ENCODE measurements at regions of chr2 and their contacts with region 1.

Region 1: DNA sequence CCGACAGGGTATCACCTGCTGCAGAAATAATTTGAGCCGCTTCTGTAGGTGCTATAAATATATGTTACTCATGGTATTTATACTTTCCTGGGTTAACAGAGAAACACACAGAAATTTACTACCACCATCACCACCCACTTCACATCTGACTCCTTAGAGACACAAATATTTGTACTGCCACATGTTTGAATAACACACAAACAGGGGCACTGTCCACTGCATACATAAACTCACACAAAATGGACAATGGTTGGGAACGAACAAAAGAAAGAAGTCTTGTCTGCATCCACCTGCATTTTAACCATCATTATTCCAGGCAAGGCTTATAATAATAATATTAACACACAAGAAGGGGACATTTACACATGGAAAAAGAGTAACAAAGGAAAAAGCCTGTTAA is 24.0 kb downstream of the IMMT start:
- DNase-seq: no peak
- ATAC-seq: no peak
- H3K4me3 ChIP-seq: no peak overlapping the region
- H3K4me3 Mint-ChIP-seq: no peak overlapping the region
- H3K27ac ChIP-seq: no peak overlapping the region
- H3K27ac Mint-ChIP-seq: peak overlapping the region in 1 of 9 donors; percentile 12
- H3K4me1 ChIP-seq: no peaks in the 10 kb centered on the region
- H3K4me1 Mint-ChIP-seq: peaks cover 10 to 31% (median 28%) of the 10 kb centered on the region in 7 donors
- H3K27me3 ChIP-seq: no peaks in the 10 kb centered on the region
- H3K27me3 Mint-ChIP-seq: no peaks in the 10 kb centered on the region

Region 2: GRCh38 chr2:86124683-86125082 is 46.6 kb before region 1 on chr2:
- CTCF ChIA-PET with region 1: no interaction called
- POLR2A ChIA-PET with region 1: no interaction called
- intact Hi-C with region 1: no loop called
- DNase-seq: no peak
- ATAC-seq: no peak
- H3K4me3 ChIP-seq: no peak overlapping the region
- H3K4me3 Mint-ChIP-seq: no peak overlapping the region
- H3K27ac ChIP-seq: no peak overlapping the region
- H3K27ac Mint-ChIP-seq: no peak overlapping the region
- H3K4me1 ChIP-seq: no peaks in the 10 kb centered on the region
- H3K4me1 Mint-ChIP-seq: no peaks in the 10 kb centered on the region
- H3K27me3 ChIP-seq: no peaks in the 10 kb centered on the region
- H3K27me3 Mint-ChIP-seq: no peaks in the 10 kb centered on the region

Region 3: DNA sequence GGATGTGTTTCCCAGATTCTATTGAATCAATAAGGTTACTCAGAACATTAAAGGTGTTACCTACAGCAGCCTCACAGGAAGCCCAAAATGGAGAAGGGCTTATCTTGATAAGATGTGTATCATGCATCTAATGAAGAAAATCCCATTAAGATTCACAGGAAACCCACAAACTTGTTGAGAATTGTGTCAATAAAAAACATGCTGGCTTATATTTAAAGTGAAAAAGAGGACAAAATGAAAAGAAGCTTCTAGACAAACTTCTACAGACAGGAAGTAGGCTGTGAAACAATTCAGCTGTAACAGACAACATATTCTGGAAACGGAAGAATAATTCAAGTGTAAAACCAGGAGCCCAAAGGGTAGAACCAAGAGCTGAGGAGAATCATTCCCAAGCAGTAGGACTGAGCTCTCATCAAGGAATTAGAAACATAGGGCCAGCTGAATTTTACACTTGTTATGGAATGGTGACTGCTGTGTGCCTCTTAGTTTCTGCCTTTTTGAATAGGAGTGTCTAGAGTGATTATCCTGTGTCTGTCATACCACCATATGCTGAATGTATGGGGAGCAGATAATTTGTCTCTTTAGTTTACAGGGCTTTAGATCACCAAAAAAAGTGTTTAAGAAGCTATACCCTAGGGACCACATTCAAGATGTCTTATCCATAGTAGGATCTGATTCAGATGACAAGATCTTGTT is 14.4 kb after region 1 on chr2:
- CTCF ChIA-PET with region 1: no interaction called
- POLR2A ChIA-PET with region 1: interaction called, 6 read pairs
- intact Hi-C with region 1: loop called in 1 of 2 experiments (anchors 2 kb)
- DNase-seq: peak in 7 of 9 donors; percentile 27 to 53 (median 46)
- ATAC-seq: peak; percentile 76
- H3K4me3 ChIP-seq: peak overlapping the region; percentile 2
- H3K4me3 Mint-ChIP-seq: peak overlapping the region; percentile 73 to 89 (median 78)
- H3K27ac ChIP-seq: peak overlapping the region; percentile 74
- H3K27ac Mint-ChIP-seq: peak overlapping the region; percentile 83 to 97 (median 90)
- H3K4me1 ChIP-seq: peaks cover 38 to 40% of the 10 kb centered on the region in 2 donors
- H3K4me1 Mint-ChIP-seq: peaks cover 49 to 89% (median 78%) of the 10 kb centered on the region in 7 donors
- H3K27me3 ChIP-seq: no peaks in the 10 kb centered on the region
- H3K27me3 Mint-ChIP-seq: no peaks in the 10 kb centered on the region

Measured in naive thymus-derived CD4-positive, alpha-beta T cell (primary cell).